ENCODE measurements at regions of chr16 and their contacts with region 1.

Region 1: GRCh38 chr16:74862741-74863244 is 88.2 kb upstream of the FA2H start:
- DNase-seq: peak; percentile 68
- H3K4me3 Mint-ChIP-seq: no peak overlapping the region
- H3K27ac Mint-ChIP-seq: no peak overlapping the region
- H3K4me1 Mint-ChIP-seq: peaks cover 7% of the 10 kb centered on the region
- H3K27me3 Mint-ChIP-seq: no peaks in the 10 kb centered on the region
- CTCF ChIP-seq: peak; percentile 92

Region 2: GRCh38 chr16:74309789-74310781 is 552.7 kb before region 1 on chr16:
- CTCF ChIA-PET with region 1: no interaction called
- POLR2A ChIA-PET with region 1: no interaction called
- intact Hi-C with region 1: loop called (anchors 10 kb)
- DNase-seq: peak; percentile 62
- H3K4me3 Mint-ChIP-seq: no peak overlapping the region
- H3K27ac Mint-ChIP-seq: no peak overlapping the region
- H3K4me1 Mint-ChIP-seq: no peaks in the 10 kb centered on the region
- H3K27me3 Mint-ChIP-seq: no peaks in the 10 kb centered on the region
- CTCF ChIP-seq: peak; percentile 72

Region 3: DNA sequence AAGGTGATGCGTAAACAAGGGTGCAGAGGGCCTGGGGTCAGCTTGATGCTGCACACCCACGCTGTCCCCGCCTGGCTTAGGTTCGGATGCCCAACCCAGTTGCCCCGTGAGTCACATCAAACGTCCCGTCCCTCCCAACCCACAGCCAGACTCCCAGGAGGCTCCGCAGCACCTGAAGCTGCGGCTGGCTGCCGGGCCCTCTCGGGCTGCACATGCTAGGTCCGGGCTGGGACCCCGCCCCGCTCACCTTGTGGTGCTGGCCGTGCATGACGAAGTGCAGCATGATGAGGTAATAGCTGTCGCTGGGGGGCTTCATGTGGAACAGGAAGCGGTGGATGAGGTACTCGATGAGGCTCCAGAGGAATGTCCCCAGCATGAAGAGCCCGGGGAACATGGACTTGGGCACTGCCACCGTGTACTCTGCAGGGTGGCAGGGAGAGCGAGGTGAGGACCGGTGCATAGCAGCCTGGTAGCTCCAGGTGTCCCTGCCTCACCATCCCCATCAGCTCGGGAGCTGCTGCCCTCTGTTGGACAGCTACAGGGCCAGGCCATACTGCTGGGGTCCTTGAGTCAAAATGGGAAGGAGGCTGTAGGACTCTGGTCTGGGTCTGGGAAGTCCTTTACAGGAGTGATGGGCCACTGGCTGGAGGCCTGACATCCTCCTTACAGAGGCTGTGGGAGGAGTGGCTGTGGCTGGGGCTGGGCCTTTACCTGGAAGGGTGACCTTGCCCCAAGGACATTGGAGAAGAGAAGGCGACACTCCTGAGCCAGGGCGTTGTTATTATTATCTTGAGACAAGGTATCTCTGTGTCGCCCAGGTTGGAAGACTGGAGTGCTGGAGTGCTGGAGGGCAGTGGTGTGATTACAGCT is 143.8 kb before region 1 on chr16:
- CTCF ChIA-PET with region 1: interaction called, 304 read pairs
- POLR2A ChIA-PET with region 1: no interaction called
- intact Hi-C with region 1: no loop called
- DNase-seq: no peak
- H3K4me3 Mint-ChIP-seq: no peak overlapping the region
- H3K27ac Mint-ChIP-seq: no peak overlapping the region
- H3K4me1 Mint-ChIP-seq: no peaks in the 10 kb centered on the region
- H3K27me3 Mint-ChIP-seq: no peaks in the 10 kb centered on the region
- CTCF ChIP-seq: no peak

Region 4: GRCh38 chr16:74774203-74775116 is 88.3 kb before region 1 on chr16 and contains the start of gene FA2H:
- CTCF ChIA-PET with region 1: interaction called, 17 read pairs
- POLR2A ChIA-PET with region 1: interaction called, 3 read pairs
- intact Hi-C with region 1: no loop called
- DNase-seq: peak; percentile 88
- H3K4me3 Mint-ChIP-seq: peak within 1 kb of the TSS; percentile 62
- H3K27ac Mint-ChIP-seq: no peak within 1 kb of the TSS
- H3K4me1 Mint-ChIP-seq: peaks cover 13% of the 10 kb centered on the region
- H3K27me3 Mint-ChIP-seq: peaks cover 23% of the 10 kb centered on the region
- CTCF ChIP-seq: peak; percentile 32
- total RNA-seq, gene FA2H: not detected in 2 replicates

Region 5: GRCh38 chr16:74830648-74831047 is 32.1 kb before region 1 on chr16:
- CTCF ChIA-PET with region 1: interaction called, 10 read pairs
- POLR2A ChIA-PET with region 1: interaction called, 3 read pairs
- intact Hi-C with region 1: no loop called
- DNase-seq: no peak
- H3K4me3 Mint-ChIP-seq: no peak overlapping the region
- H3K27ac Mint-ChIP-seq: no peak overlapping the region
- H3K4me1 Mint-ChIP-seq: no peaks in the 10 kb centered on the region
- H3K27me3 Mint-ChIP-seq: peaks cover 15% of the 10 kb centered on the region
- CTCF ChIP-seq: no peak

Region 6: DNA sequence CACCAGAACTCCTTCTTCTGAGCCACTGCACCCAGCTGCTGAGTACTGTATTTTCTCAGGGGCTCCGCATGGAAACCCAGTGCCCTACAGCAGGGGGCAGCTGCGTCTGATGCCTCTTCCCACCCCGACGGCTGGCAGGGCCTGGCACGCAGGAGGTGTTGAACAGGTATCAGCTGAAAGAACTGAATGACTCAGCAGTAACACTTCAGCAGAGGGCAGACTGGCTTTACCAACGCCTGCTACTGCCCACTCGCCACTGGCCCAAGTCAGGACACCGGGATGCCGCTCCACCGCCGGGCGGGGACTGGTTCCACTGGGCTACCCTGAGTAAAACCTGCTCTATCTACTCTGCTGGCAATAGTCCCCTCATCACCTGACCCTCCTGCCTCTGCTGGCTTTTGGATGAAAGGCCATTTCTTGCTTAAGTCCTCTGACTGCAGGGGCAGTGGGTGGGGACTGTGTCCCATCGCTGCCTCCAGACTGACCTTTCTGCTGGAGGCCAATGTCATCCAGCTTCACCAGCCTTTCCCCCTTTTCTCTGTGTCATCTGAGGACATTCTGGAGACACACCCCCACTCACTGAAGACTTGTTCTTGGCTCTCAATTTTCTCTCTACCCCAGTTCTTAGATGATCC is 12.2 kb after region 1 on chr16:
- CTCF ChIA-PET with region 1: interaction called, 48 read pairs
- POLR2A ChIA-PET with region 1: no interaction called
- intact Hi-C with region 1: no loop called
- DNase-seq: no peak
- H3K4me3 Mint-ChIP-seq: no peak overlapping the region
- H3K27ac Mint-ChIP-seq: no peak overlapping the region
- H3K4me1 Mint-ChIP-seq: peaks cover 6% of the 10 kb centered on the region
- H3K27me3 Mint-ChIP-seq: no peaks in the 10 kb centered on the region
- CTCF ChIP-seq: no peak

Measured in MCF 10A (cell line).